Naive thymus-derived CD4-positive, alpha-beta T cell (primary cell): ENCODE measurements at regions of chr3 and their contacts with region 1.

Region 1: GRCh38 chr3:67083277-67083676 is 85.2 kb downstream of the KBTBD8 start:
- DNase-seq: peak in 8 of 9 donors; percentile 37 to 75 (median 67)
- ATAC-seq: peak; percentile 87
- H3K4me3 ChIP-seq: peak overlapping the region; percentile 56
- H3K4me3 Mint-ChIP-seq: peak overlapping the region; percentile 54 to 91 (median 71)
- H3K27ac ChIP-seq: peak overlapping the region; percentile 61
- H3K27ac Mint-ChIP-seq: peak overlapping the region; percentile 73 to 96 (median 88)
- H3K4me1 ChIP-seq: peaks cover 19 to 22% of the 10 kb centered on the region in 2 donors
- H3K4me1 Mint-ChIP-seq: peaks cover 16 to 46% (median 27%) of the 10 kb centered on the region in 7 donors
- H3K27me3 ChIP-seq: no peaks in the 10 kb centered on the region
- H3K27me3 Mint-ChIP-seq: peaks cover 0 to 12% (median 6%) of the 10 kb centered on the region in 5 donors

Region 2: GRCh38 chr3:67037615-67038014 is 45.7 kb before region 1 on chr3:
- CTCF ChIA-PET with region 1: no interaction called
- POLR2A ChIA-PET with region 1: no interaction called
- intact Hi-C with region 1: loop called in 1 of 2 experiments (anchors 1 kb)
- DNase-seq: peak in 2 of 9 donors; percentile 1 to 11
- ATAC-seq: no peak
- H3K4me3 ChIP-seq: no peak overlapping the region
- H3K4me3 Mint-ChIP-seq: no peak overlapping the region
- H3K27ac ChIP-seq: no peak overlapping the region
- H3K27ac Mint-ChIP-seq: no peak overlapping the region
- H3K4me1 ChIP-seq: no peaks in the 10 kb centered on the region
- H3K4me1 Mint-ChIP-seq: no peaks in the 10 kb centered on the region
- H3K27me3 ChIP-seq: no peaks in the 10 kb centered on the region
- H3K27me3 Mint-ChIP-seq: no peaks in the 10 kb centered on the region

Region 3: DNA sequence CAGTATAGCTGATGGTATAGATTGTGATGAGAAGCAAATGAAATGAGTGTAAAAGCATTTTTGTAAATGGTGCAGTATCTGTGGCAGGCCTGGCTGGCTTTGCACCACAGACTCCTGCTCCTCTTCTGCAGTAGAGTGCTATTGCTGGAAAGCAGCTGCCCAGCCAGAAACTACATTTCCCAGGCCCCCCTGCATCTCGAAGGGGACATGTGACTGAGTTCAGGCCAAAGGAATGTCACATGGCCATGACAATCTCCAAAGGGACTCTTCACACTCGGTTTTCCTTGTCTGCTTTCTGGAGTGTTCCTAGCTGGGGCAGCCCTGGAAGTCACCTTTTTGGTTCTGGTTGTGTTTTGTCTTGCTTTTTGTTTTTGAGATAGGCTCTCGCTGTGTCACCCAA is 294.0 kb after region 1 on chr3:
- CTCF ChIA-PET with region 1: no interaction called
- POLR2A ChIA-PET with region 1: no interaction called
- intact Hi-C with region 1: no loop called
- DNase-seq: no peak
- ATAC-seq: no peak
- H3K4me3 ChIP-seq: no peak overlapping the region
- H3K4me3 Mint-ChIP-seq: no peak overlapping the region
- H3K27ac ChIP-seq: no peak overlapping the region
- H3K27ac Mint-ChIP-seq: peak overlapping the region in 1 of 9 donors; percentile 19
- H3K4me1 ChIP-seq: no peaks in the 10 kb centered on the region
- H3K4me1 Mint-ChIP-seq: peaks cover 6 to 28% (median 19%) of the 10 kb centered on the region in 7 donors
- H3K27me3 ChIP-seq: no peaks in the 10 kb centered on the region
- H3K27me3 Mint-ChIP-seq: no peaks in the 10 kb centered on the region